Psoas muscle (tissue), 8 donors: ENCODE measurements at regions of chr14 and their contacts with region 1.

Region 1: GRCh38 chr14:69611201-69612011 is at the start of gene SUSD6:
- DNase-seq: peak; percentile 92 to 95
- ATAC-seq: peak; percentile 87 to 92 (median 91)
- H3K4me3 ChIP-seq: peak within 1 kb of the TSS; percentile 83
- H3K27ac ChIP-seq: peak within 1 kb of the TSS; percentile 97
- H3K4me1 ChIP-seq: peaks cover 45% of the 10 kb centered on the region
- H3K27me3 ChIP-seq: no peaks in the 10 kb centered on the region
- CTCF ChIP-seq: no peak
- total RNA-seq, gene SUSD6: 14.9 to 23.4 (median 22.4) TPM

Region 2: DNA sequence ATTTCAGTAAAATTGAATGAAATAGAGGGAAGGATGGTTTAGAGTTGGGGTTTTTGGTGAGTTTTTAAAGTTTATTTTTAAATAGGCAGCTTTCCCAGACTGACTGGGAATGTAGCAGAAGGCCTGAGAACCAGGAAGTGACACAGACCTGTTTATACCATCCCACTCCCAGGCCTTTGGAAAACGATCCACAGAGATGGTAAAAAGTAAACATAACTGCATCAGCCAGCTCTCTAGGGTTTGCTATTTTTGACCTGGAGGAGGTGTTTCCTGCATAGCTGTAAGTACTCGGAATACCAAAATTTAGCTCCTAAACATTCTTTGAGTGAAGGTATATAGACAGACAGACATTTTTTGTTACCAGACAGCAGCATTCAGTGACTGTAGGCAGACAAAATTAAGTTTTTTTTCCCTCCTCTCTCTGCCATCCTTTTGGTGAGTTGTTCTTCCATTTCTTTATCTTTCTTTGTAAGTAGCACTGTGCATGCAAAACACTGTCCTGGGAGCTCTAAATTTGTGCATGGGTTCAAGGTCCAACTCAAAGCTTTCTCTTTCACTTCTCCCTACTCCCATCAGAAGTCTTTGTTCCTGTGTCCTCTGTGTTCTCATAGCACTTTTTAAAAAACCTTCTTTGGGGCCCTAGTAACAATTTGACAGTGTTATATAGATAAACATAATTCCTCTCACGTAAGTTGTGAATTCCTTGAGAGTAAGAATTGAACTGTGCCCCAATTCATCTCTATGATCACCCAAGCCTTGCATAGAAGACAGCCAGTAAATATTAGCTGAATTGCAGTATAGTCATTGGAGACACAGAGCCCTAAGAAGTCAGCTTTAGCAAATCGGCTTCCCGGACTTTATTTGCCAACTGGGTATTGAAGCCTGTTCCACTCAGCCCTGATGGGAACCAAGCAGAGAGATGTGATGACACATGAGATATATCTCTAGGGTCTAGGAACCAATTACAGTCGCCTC is 37.4 kb after region 1 on chr14:
- intact Hi-C with region 1: loop called in 1 of 2 experiments (anchors 5 kb)
- DNase-seq: no peak
- ATAC-seq: peak in 1 of 4 donors; percentile 52
- H3K4me3 ChIP-seq: no peak overlapping the region
- H3K27ac ChIP-seq: peak overlapping the region; percentile 71
- H3K4me1 ChIP-seq: peaks cover 75% of the 10 kb centered on the region
- H3K27me3 ChIP-seq: no peaks in the 10 kb centered on the region
- CTCF ChIP-seq: no peak

Region 3: GRCh38 chr14:69673578-69674305 is 62.3 kb after region 1 on chr14:
- intact Hi-C with region 1: no loop called
- DNase-seq: no peak
- ATAC-seq: peak; percentile 52 to 66 (median 58)
- H3K4me3 ChIP-seq: no peak overlapping the region
- H3K27ac ChIP-seq: peak overlapping the region; percentile 34
- H3K4me1 ChIP-seq: peaks cover 72% of the 10 kb centered on the region
- H3K27me3 ChIP-seq: no peaks in the 10 kb centered on the region
- CTCF ChIP-seq: peak; percentile 4

Region 4: GRCh38 chr14:69712599-69713088 is 101.2 kb after region 1 on chr14:
- intact Hi-C with region 1: loop called in 1 of 2 experiments (anchors 5 kb)
- DNase-seq: peak; percentile 40 to 66
- ATAC-seq: peak; percentile 21 to 54 (median 48)
- H3K4me3 ChIP-seq: no peak overlapping the region
- H3K27ac ChIP-seq: peak overlapping the region; percentile 72
- H3K4me1 ChIP-seq: peaks cover 46% of the 10 kb centered on the region
- H3K27me3 ChIP-seq: no peaks in the 10 kb centered on the region
- CTCF ChIP-seq: no peak